RWPE1 (cell line): ENCODE measurements at regions of chr16 and their contacts with region 1.

Region 1: GRCh38 chr16:68520649-68521086 is 18.4 kb upstream of the ZFP90 start:
- DNase-seq: peak; percentile 90
- H3K27ac ChIP-seq: no peak overlapping the region
- CTCF ChIP-seq: peak; percentile 95

Region 2: DNA sequence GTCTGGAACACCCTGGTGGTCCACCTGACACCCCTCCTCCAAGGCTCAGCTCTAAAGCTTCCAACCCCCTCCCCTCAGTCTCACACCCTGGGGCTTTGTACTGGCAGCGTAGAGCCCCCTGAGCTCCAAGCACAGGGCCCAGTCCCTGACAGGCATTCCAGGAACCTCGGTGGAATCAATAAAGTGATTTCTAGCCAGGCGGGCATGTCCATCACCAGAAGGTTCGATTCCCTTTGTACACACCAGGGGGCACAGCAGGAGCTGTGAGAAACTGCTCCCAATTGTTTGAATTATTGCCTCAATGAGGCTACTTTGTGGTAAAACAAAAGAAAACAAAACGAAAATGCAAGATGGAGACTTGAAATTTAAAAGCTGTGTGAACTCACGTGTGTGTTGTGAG is 124.2 kb before region 1 on chr16:
- CTCF ChIA-PET with region 1: interaction called, 10 read pairs
- POLR2A ChIA-PET with region 1: no interaction called
- DNase-seq: peak; percentile 54
- H3K27ac ChIP-seq: no peak overlapping the region
- CTCF ChIP-seq: no peak; the same call in 1 of the 2 replicates

Region 3: GRCh38 chr16:68490829-68491575 is 29.7 kb before region 1 on chr16:
- CTCF ChIA-PET with region 1: no interaction called
- POLR2A ChIA-PET with region 1: no interaction called
- DNase-seq: peak; percentile 97
- H3K27ac ChIP-seq: peak overlapping the region; percentile 93
- CTCF ChIP-seq: no peak